ENCODE measurements at regions of chr11 and their contacts with region 1.

Region 1: GRCh38 chr11:131674051-131674755 is 303.8 kb downstream of the NTM start:
- DNase-seq: peak; percentile 55
- ATAC-seq: peak; percentile 49
- H3K4me3 Mint-ChIP-seq: no peak overlapping the region
- H3K27ac Mint-ChIP-seq: no peak overlapping the region
- H3K4me1 Mint-ChIP-seq: no peaks in the 10 kb centered on the region
- H3K27me3 Mint-ChIP-seq: no peaks in the 10 kb centered on the region

Region 2: GRCh38 chr11:131064373-131064991 is 609.7 kb before region 1 on chr11:
- CTCF ChIA-PET with region 1: interaction called, 19 read pairs
- DNase-seq: no peak
- ATAC-seq: no peak
- H3K4me3 Mint-ChIP-seq: no peak overlapping the region
- H3K27ac Mint-ChIP-seq: no peak overlapping the region
- H3K4me1 Mint-ChIP-seq: no peaks in the 10 kb centered on the region
- H3K27me3 Mint-ChIP-seq: no peaks in the 10 kb centered on the region

Region 3: DNA sequence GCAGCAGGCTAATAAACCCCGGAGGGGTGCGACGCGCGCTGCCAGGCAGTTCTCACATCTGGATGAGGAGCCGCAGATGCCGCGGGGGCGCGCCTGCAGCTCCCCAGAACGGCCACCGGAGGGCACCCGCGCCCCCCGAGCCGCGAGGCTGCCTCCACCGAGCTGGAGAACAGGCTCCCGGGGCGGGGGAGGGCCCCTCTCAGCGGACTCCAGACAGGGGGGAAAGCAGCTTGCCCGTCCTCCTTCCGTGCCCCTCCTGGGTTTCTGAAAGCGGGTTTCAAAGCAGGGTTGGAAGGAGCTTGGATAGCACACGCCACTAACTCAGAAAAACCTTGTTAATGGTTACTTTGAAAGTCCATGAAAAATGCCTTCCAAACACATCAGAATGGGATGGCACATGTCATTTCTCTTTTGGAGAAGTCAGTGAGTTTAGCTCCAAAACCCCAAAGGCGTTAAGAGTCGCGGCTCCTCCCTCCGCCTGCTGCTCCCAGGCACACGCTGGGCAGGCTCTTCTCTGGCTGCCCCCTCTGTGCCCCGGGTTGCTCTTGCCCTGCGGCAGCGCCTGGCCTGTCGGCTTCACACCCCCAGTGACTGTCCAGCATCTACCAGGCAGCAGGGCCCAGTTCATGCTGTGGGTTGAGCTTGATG is 14.0 kb after region 1 on chr11:
- CTCF ChIA-PET with region 1: interaction called, 14 read pairs
- DNase-seq: peak; percentile 46
- ATAC-seq: peak; percentile 70
- H3K4me3 Mint-ChIP-seq: no peak overlapping the region
- H3K27ac Mint-ChIP-seq: no peak overlapping the region
- H3K4me1 Mint-ChIP-seq: no peaks in the 10 kb centered on the region
- H3K27me3 Mint-ChIP-seq: no peaks in the 10 kb centered on the region

Measured in activated CD8-positive, alpha-beta memory T cell treated with anti-CD3 and anti-CD28 coated beads, Interleukin-2, amount 10 ng/mL, durations not matched to agents 7 days and 5 days (primary cell).